Heart left ventricle (tissue), 16 donors: ENCODE measurements at regions of chr1 and their contacts with region 1.

Region 1: DNA sequence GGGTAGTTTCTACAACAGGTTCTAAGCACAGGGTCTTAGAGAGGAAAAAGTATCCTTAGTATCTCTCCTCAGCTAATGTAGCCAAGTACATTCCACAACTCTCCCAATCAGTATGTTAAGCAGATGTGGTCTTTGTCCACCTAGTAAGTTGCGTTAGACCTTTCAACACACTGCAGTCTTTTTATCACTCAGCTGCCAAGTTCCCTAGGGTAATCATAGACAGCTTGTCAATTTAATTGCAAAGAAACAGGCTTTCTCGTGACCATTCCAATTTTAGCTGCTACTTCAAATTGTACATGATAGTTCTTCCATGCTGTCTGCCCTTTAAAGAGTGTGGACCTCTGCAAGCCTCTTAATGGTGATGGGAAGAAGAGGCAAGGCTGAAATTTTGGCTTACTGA is 211.8 kb upstream of the PKN2 start:
- DNase-seq: peak in 2 of 5 donors; percentile 13 to 22
- ATAC-seq: peak; percentile 94 to 98 (median 98)
- H3K4me3 ChIP-seq: no peak overlapping the region
- H3K27ac ChIP-seq: peak overlapping the region in 8 of 12 donors; percentile 5 to 62 (median 44)
- H3K4me1 ChIP-seq: peaks cover 0 to 31% (median 8%) of the 10 kb centered on the region in 12 donors
- H3K27me3 ChIP-seq: no peaks in the 10 kb centered on the region
- CTCF ChIP-seq: no peak
- POLR2A ChIP-seq: no peak

Region 2: GRCh38 chr1:88228152-88228551 is 244.1 kb before region 1 on chr1:
- intact Hi-C with region 1: no loop called
- DNase-seq: no peak
- ATAC-seq: no peak
- H3K4me3 ChIP-seq: no peak overlapping the region
- H3K27ac ChIP-seq: no peak overlapping the region
- H3K4me1 ChIP-seq: no peaks in the 10 kb centered on the region
- H3K27me3 ChIP-seq: no peaks in the 10 kb centered on the region
- CTCF ChIP-seq: no peak
- POLR2A ChIP-seq: no peak

Region 3: DNA sequence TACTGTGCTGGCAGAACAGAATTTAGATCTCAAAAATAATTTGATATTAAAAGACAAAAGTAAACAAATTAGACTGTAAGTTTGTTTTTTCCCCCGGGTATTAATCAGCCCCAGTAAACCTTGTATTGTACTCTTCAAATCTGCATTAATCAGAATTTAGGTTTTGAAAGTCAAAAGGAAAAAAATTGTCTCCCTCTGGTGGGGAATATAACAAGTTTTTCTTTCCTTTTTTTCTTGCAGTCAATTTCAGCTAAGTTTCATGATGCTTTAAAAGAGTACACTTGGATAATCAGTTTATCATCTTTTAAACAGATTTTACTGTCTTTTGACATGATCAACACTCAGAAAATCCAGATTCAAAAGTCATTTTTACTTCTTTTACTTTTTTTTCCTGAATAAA is 77.2 kb after region 1 on chr1:
- intact Hi-C with region 1: loop called in 1 of 10 experiments (anchors 10 kb)
- DNase-seq: no peak
- ATAC-seq: no peak
- H3K4me3 ChIP-seq: no peak overlapping the region
- H3K27ac ChIP-seq: no peak overlapping the region
- H3K4me1 ChIP-seq: no peaks in the 10 kb centered on the region
- H3K27me3 ChIP-seq: no peaks in the 10 kb centered on the region
- CTCF ChIP-seq: peak in 8 of 12 donors; percentile 18 to 50 (median 32)
- POLR2A ChIP-seq: no peak